Activated CD4-positive, alpha-beta memory T cell treated with anti-CD3 and anti-CD28 coated beads for 36 hours (primary cell): ENCODE measurements at regions of chr11 and their contacts with region 1.

Region 1: GRCh38 chr11:61111786-61112517 is 9.7 kb downstream of the CD5 start:
- DNase-seq: peak; percentile 89
- H3K4me3 Mint-ChIP-seq: no peak overlapping the region
- H3K27ac Mint-ChIP-seq: no peak overlapping the region
- H3K4me1 Mint-ChIP-seq: peaks cover 97% of the 10 kb centered on the region
- H3K27me3 Mint-ChIP-seq: no peaks in the 10 kb centered on the region

Region 2: GRCh38 chr11:60913793-60914632 is 197.9 kb before region 1 on chr11 and contains the start of gene TMEM109:
- CTCF ChIA-PET with region 1: no interaction called
- POLR2A ChIA-PET with region 1: interaction called, 5 read pairs
- intact Hi-C with region 1: loop called (anchors 2 kb)
- DNase-seq: peak; percentile 92
- H3K4me3 Mint-ChIP-seq: peak within 1 kb of the TSS; percentile 92
- H3K27ac Mint-ChIP-seq: peak within 1 kb of the TSS; percentile 91
- H3K4me1 Mint-ChIP-seq: peaks cover 56% of the 10 kb centered on the region
- H3K27me3 Mint-ChIP-seq: no peaks in the 10 kb centered on the region
- total RNA-seq, gene TMEM109: 101 to 106 TPM

Region 3: GRCh38 chr11:60978546-60979380 is 133.2 kb before region 1 on chr11:
- CTCF ChIA-PET with region 1: interaction called, 3 read pairs
- POLR2A ChIA-PET with region 1: interaction called, 10 read pairs
- intact Hi-C with region 1: no loop called
- DNase-seq: peak; percentile 92
- H3K4me3 Mint-ChIP-seq: peak overlapping the region; percentile 95
- H3K27ac Mint-ChIP-seq: peak overlapping the region; percentile 99
- H3K4me1 Mint-ChIP-seq: peaks cover 71% of the 10 kb centered on the region
- H3K27me3 Mint-ChIP-seq: no peaks in the 10 kb centered on the region

Region 4: DNA sequence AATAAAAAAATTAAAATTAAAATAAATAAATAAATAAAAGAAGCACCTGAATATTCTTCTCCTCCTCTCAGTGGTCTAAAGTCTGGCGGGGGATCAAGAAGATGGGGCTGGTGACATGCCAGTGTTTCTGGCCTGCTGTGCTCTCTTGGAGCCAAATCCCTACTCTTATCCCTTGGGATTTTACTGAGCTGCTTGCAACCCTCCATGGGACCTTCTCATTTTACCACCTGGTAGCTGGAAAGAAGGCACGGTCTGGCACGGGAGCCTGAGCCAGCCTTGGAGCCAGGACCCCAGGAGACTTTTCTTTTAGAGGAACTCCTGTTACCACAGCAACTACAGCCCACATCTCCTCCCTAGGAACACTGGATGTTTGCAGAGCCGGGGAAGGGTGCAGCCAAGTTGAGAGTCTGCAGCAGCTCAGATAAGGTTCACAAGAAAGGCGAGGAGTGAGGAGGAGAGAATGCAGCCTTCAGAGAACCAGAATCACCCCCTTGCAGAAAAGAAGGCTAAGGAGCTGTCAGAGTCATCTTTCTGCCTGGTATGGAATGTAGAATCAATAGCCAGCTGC is 119.0 kb before region 1 on chr11:
- CTCF ChIA-PET with region 1: no interaction called
- POLR2A ChIA-PET with region 1: interaction called, 12 read pairs
- intact Hi-C with region 1: no loop called
- DNase-seq: peak; percentile 19
- H3K4me3 Mint-ChIP-seq: peak overlapping the region; percentile 68
- H3K27ac Mint-ChIP-seq: peak overlapping the region; percentile 97
- H3K4me1 Mint-ChIP-seq: peaks cover 81% of the 10 kb centered on the region
- H3K27me3 Mint-ChIP-seq: no peaks in the 10 kb centered on the region

Region 5: GRCh38 chr11:61041755-61042518 is 70.0 kb before region 1 on chr11:
- CTCF ChIA-PET with region 1: interaction called, 3 read pairs
- POLR2A ChIA-PET with region 1: interaction called, 28 read pairs
- intact Hi-C with region 1: no loop called
- DNase-seq: peak; percentile 92
- H3K4me3 Mint-ChIP-seq: peak overlapping the region; percentile 68
- H3K27ac Mint-ChIP-seq: peak overlapping the region; percentile 96
- H3K4me1 Mint-ChIP-seq: peaks cover 71% of the 10 kb centered on the region
- H3K27me3 Mint-ChIP-seq: no peaks in the 10 kb centered on the region

Region 6: GRCh38 chr11:61129639-61130523 is 17.9 kb after region 1 on chr11:
- CTCF ChIA-PET with region 1: interaction called, 30 read pairs
- POLR2A ChIA-PET with region 1: interaction called, 5 read pairs
- intact Hi-C with region 1: no loop called
- DNase-seq: peak; percentile 95
- H3K4me3 Mint-ChIP-seq: peak overlapping the region; percentile 17
- H3K27ac Mint-ChIP-seq: peak overlapping the region; percentile 57
- H3K4me1 Mint-ChIP-seq: peaks cover 25% of the 10 kb centered on the region
- H3K27me3 Mint-ChIP-seq: no peaks in the 10 kb centered on the region